ENCODE measurements at regions of chr1 and their contacts with region 1.

Region 1: DNA sequence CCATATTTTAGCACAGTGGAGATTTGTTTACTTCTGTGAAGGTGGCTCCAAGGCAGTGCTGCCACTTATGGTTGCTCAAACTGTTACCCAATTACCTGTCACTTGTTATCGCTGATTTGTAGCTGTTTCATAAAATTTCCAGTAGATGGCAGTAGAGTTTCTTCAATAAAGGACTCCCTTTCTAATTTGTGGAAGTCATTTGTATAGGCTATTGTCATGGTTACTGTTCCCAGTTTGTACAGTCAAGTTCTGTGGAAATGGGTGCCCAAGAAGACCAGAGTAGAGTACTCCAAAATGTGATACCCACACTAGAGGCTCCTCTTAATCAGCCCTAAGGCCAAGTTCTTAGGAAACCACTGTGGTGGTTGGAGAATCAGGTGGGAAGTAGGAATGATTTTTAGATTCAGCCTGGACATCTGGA is 186.1 kb downstream of the CLEC20A start:
- DNase-seq: no peak
- ATAC-seq: peak; percentile 78 to 86 (median 82)
- H3K4me3 ChIP-seq: no peak overlapping the region
- H3K27ac ChIP-seq: peak overlapping the region in 1 of 12 donors; percentile 45
- H3K4me1 ChIP-seq: peaks cover 0 to 25% (median 8%) of the 10 kb centered on the region in 12 donors
- H3K27me3 ChIP-seq: no peaks in the 10 kb centered on the region
- CTCF ChIP-seq: peak; percentile 61 to 84 (median 78)
- POLR2A ChIP-seq: no peak

Region 2: DNA sequence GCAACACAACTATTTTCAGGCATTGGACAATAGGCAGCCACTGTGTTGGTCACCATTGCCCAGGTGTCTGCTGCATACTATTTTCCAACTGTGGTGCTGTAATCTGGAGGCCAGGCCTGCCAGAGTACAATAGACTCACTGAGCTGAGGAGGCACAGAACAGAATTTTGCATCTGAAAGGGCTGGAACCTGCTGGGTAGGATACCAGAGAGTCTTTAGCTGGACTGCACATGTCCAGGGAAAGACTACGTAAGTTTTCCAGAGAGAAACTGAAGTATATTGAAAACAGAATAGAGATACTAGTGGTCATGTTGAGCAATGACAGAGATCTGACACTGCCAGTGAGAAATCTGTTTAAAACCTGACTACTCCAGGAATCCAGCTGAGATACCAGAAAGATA is 16.0 kb before region 1 on chr1:
- intact Hi-C with region 1: no loop called
- DNase-seq: no peak
- ATAC-seq: peak in 2 of 4 donors; percentile 20 to 24
- H3K4me3 ChIP-seq: no peak overlapping the region
- H3K27ac ChIP-seq: no peak overlapping the region
- H3K4me1 ChIP-seq: peaks cover 0 to 12% (median 0%) of the 10 kb centered on the region in 12 donors
- H3K27me3 ChIP-seq: no peaks in the 10 kb centered on the region
- CTCF ChIP-seq: peak in 1 of 12 donors; percentile 11
- POLR2A ChIP-seq: no peak

Region 3: GRCh38 chr1:178465011-178465410 is 154.3 kb after region 1 on chr1:
- intact Hi-C with region 1: loop called in 1 of 10 experiments (anchors 10 kb)
- DNase-seq: no peak
- ATAC-seq: no peak
- H3K4me3 ChIP-seq: no peak overlapping the region
- H3K27ac ChIP-seq: no peak overlapping the region
- H3K4me1 ChIP-seq: peaks cover 0 to 21% (median 3%) of the 10 kb centered on the region in 12 donors
- H3K27me3 ChIP-seq: no peaks in the 10 kb centered on the region
- CTCF ChIP-seq: no peak
- POLR2A ChIP-seq: no peak

Region 4: DNA sequence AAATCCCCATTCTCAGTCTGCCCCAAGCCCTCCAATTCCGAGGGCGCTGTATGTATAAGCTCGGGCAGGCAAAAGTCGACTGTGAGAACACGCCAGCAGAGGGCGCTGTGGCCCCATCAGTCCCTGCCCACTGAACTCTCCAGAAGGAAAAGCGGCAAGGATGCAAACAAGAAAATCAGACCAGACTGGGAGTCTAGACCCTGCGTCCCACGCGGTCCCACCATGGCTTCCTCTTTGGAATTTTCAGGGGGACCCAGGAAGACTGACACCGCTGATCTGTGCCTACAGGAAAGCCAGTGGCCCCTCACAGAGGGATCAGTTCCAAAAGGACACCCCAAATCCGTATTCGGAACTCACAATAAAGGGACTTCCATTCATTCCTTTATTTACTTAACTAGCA is 221.7 kb after region 1 on chr1:
- intact Hi-C with region 1: loop called in 2 of 10 experiments (anchors 5 to 10 kb)
- DNase-seq: peak; percentile 76 to 91 (median 82)
- ATAC-seq: peak in 3 of 4 donors; percentile 55 to 68 (median 60)
- H3K4me3 ChIP-seq: peak overlapping the region in 1 of 12 donors; percentile 2
- H3K27ac ChIP-seq: peak overlapping the region in 2 of 12 donors; percentile 13 to 41
- H3K4me1 ChIP-seq: peaks cover 0 to 23% (median 9%) of the 10 kb centered on the region in 12 donors
- H3K27me3 ChIP-seq: no peaks in the 10 kb centered on the region
- CTCF ChIP-seq: peak; percentile 78 to 95 (median 90)
- POLR2A ChIP-seq: no peak

Region 5: DNA sequence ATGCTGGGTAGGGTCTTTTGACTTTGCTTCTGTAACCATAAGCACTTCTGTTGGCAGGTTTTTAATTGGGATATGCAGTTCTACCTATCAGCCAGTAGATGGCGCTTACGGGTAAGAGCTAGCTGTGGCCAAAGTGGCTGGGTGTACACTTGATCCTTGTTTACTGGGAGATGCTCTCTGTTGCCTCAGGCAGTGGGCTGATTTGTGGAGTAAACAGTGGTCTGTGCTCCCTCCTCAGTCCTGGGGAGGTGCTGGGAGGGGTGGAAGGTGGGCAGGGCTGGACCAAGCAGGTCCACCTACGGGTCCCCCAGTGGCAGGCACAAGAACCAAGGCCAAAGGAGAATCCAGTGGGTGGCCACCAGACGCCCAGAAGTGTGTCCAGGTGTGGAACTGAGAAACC is 457.7 kb after region 1 on chr1:
- intact Hi-C with region 1: loop called in 1 of 10 experiments (anchors 10 kb)
- DNase-seq: peak in 1 of 5 donors; percentile 42
- ATAC-seq: peak in 2 of 4 donors; percentile 31 to 47
- H3K4me3 ChIP-seq: no peak overlapping the region
- H3K27ac ChIP-seq: no peak overlapping the region
- H3K4me1 ChIP-seq: no peaks in the 10 kb centered on the region
- H3K27me3 ChIP-seq: no peaks in the 10 kb centered on the region
- CTCF ChIP-seq: peak; percentile 48 to 73 (median 66)
- POLR2A ChIP-seq: no peak